ENCODE measurements at regions of chr1 and their contacts with region 1.

Region 1: DNA sequence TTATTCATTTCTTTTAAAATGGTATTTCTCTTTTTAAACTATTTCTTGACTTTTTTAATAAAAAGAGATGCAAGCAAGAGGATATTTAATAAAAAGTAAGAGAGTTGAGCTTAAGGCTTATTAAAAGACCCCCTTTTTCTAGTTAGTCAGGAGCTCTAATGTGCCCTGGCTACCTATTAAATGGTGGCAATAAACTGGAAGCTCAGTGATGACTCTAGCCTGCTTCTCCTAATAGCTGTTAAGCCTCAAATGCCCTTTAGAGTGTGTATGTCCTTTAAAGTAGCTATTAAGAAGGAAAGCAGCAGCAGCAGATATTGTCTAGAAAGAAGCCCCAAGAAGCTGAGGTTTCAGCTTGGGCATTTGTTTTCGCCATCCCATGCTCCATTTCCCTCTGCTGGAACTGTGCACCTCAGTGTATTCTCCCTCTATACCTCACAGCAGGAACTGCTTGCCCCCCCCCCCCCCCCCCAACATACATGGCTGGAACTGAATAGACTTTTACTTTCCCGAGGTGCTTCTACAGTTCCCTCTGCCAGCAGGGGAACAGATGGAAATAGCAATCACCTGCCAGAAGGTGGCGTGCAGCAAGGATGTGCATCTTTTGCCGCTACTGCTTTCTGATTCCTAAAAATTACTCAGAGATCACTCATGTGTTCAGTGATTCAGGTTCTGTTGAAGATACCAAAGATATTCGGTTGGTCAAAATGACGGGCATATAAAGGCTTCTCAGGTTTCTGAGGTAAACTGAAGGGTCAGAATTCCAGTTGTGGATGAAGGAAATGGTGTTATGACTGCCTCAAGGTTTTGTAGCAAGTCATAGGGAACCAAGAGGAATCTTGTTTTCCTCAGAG is 2.5 kb downstream of the RGS4 start:
- DNase-seq: peak; percentile 31
- H3K4me3 ChIP-seq: peak overlapping the region; percentile 35
- H3K27me3 ChIP-seq: no peaks in the 10 kb centered on the region
- CTCF ChIP-seq: peak; percentile 81

Region 2: DNA sequence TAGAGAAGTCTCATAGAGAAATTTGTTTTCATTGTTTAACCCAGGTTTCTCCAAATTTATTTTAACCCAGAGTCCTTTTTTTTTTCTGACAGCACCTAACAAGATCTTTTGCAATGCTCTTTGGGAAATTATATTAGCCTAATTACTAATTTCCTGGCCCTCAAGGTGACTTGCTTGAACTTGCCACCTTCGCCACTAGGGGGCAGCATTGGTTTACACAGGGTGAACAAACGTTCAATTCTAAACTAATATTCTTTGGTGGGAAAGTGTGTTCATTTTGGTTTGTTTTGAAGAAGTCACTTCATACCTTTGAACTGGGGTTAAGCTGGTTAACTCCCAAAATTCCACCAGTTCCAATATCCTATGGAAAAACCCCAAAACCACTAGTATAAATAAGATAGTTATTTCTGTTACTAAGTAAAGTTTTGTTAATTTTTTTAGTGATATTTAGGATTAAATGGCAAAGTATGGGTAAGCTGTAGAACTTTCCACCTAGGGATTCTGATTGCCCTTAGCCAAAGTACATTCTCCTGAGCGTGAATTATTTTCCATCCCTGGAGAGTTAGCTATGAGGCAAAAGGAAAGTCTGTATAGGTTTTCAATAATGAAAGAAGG is 223.7 kb before region 1 on chr1:
- CTCF ChIA-PET with region 1: interaction called, 47 read pairs
- POLR2A ChIA-PET with region 1: no interaction called
- DNase-seq: no peak
- H3K4me3 ChIP-seq: no peak overlapping the region
- H3K27me3 ChIP-seq: no peaks in the 10 kb centered on the region
- CTCF ChIP-seq: peak; percentile 87

Region 3: GRCh38 chr1:162878000-162878596 is 193.5 kb before region 1 on chr1:
- CTCF ChIA-PET with region 1: interaction called, 88 read pairs
- POLR2A ChIA-PET with region 1: interaction called, 3 read pairs
- DNase-seq: no peak
- H3K4me3 ChIP-seq: no peak overlapping the region
- H3K27me3 ChIP-seq: no peaks in the 10 kb centered on the region
- CTCF ChIP-seq: peak; percentile 81

Region 4: GRCh38 chr1:163056840-163057239 is 14.8 kb before region 1 on chr1:
- CTCF ChIA-PET with region 1: interaction called, 18 read pairs
- POLR2A ChIA-PET with region 1: interaction called, 9 read pairs
- DNase-seq: peak; percentile 39
- H3K4me3 ChIP-seq: no peak overlapping the region
- H3K27me3 ChIP-seq: no peaks in the 10 kb centered on the region
- CTCF ChIP-seq: no peak

Region 5: DNA sequence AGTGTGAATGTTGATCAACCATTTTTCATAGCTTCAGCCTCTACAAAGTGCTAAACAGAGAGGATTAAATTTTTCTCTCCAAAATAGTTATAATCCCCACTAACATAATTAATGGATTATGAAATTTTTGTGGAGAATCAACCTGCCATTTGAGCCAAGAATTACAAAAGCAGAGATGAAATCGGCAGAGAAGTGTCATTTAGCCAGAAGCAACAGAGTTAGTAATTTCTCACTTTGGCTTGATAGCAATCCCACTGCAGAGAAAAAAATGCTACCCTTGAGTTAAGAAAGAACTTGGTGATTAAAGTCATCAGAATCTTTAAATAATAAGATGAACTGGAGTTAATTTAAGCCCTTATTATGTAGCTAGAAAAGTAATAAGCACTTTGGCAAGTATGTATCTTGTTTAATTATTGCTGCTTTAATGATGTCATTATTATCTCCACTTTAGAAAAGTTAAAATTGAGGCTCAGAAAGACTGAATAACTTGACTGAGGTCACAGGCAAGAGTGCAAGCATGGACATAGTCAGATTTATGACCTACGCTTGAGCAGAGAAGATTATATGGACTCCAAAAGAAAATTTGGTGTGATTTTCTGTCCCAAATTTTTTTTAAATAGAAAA is 34.8 kb after region 1 on chr1:
- CTCF ChIA-PET with region 1: no interaction called
- POLR2A ChIA-PET with region 1: no interaction called
- DNase-seq: no peak
- H3K4me3 ChIP-seq: no peak overlapping the region
- H3K27me3 ChIP-seq: no peaks in the 10 kb centered on the region
- CTCF ChIP-seq: no peak

Region 6: GRCh38 chr1:163174524-163175437 is 103.2 kb after region 1 on chr1:
- CTCF ChIA-PET with region 1: interaction called, 117 read pairs
- POLR2A ChIA-PET with region 1: no interaction called
- DNase-seq: no peak
- H3K4me3 ChIP-seq: no peak overlapping the region
- H3K27me3 ChIP-seq: no peaks in the 10 kb centered on the region
- CTCF ChIP-seq: peak; percentile 88

Measured in BJ (cell line).